Activated T-helper 1 cell treated with anti-CD3 and anti-CD28 coated beads, Interleukin-12 subunit alpha, Interleukin-12 subunit beta, Interleukin-2, Interleukin-4 antibody, amounts not matched to agents 30 ng/mL and 10 ng/mL and 1 ng/mL, durations not matched to agents 14 hours and 24 hours and 36 hours (primary cell): ENCODE measurements at regions of chr10 and their contacts with region 1.

Region 1: GRCh38 chr10:80472234-80473095 is 18.4 kb downstream of the TSPAN14 start:
- DNase-seq: peak; percentile 34
- H3K4me3 Mint-ChIP-seq: peak overlapping the region; percentile 48
- H3K27ac Mint-ChIP-seq: peak overlapping the region; percentile 97
- H3K4me1 Mint-ChIP-seq: peaks cover 80% of the 10 kb centered on the region
- H3K27me3 Mint-ChIP-seq: no peaks in the 10 kb centered on the region

Region 2: DNA sequence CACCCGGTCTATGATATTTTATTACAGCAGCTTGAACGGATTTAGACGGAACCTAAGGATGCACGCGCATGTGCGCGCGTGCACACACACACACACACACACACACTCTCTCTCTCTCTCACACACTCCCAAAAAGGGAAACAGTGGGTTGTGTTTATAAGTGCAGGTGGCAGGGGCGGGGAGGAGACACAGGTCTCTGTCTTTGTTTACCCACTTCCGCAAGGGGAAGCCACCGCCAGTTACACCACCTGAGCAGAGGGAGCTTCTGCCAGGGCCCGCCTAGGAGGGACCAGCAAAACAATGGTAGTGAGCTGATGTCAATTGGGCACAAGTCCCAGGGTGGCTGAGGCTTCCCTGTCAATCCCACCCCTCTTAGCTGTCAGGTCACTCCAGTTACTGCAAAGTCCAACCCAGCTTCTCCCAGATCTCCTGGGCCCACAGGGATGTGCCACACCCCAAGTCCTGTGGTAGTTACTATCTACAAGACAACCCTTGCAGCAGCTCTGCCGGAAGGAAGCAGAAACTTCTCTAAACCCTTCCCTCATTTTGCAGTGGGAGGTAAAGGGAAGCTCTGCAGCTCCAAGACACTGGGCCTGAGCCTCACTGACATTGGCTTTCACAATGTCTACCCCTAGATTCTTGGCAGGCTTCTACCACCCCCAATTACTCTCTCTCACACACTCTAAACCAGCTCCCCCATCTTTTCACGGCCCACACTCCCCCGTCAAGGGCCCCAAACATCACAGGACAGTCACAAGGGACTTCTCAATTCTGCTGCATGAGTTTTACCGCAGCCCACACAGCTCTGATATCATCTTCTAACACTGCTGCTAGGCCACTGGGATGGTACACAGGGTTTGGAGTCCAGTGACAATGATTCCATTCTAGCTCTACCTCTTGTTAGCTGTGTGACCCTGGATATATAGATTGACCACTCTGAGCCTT is 284.7 kb before region 1 on chr10:
- intact Hi-C with region 1: loop called (anchors 5 kb)
- DNase-seq: peak; percentile 75
- H3K4me3 Mint-ChIP-seq: peak overlapping the region; percentile 68
- H3K27ac Mint-ChIP-seq: peak overlapping the region; percentile 94
- H3K4me1 Mint-ChIP-seq: peaks cover 78% of the 10 kb centered on the region
- H3K27me3 Mint-ChIP-seq: no peaks in the 10 kb centered on the region

Region 3: GRCh38 chr10:80453701-80454513 is 18.6 kb before region 1 on chr10 and contains the start of gene TSPAN14:
- intact Hi-C with region 1: loop called (anchors 1 kb)
- DNase-seq: peak; percentile 73
- H3K4me3 Mint-ChIP-seq: peak within 1 kb of the TSS; percentile 98
- H3K27ac Mint-ChIP-seq: peak within 1 kb of the TSS; percentile 88
- H3K4me1 Mint-ChIP-seq: peaks cover 49% of the 10 kb centered on the region
- H3K27me3 Mint-ChIP-seq: no peaks in the 10 kb centered on the region
- total RNA-seq, gene TSPAN14: 75.4 and 81.9 TPM in 2 replicates

Region 4: GRCh38 chr10:80459047-80459931 is 13.2 kb before region 1 on chr10:
- intact Hi-C with region 1: loop called (anchors 1 kb)
- DNase-seq: peak; percentile 67
- H3K4me3 Mint-ChIP-seq: peak overlapping the region; percentile 98
- H3K27ac Mint-ChIP-seq: peak overlapping the region; percentile 88
- H3K4me1 Mint-ChIP-seq: peaks cover 86% of the 10 kb centered on the region
- H3K27me3 Mint-ChIP-seq: no peaks in the 10 kb centered on the region

Region 5: GRCh38 chr10:80487791-80488538 is 15.5 kb after region 1 on chr10:
- intact Hi-C with region 1: loop called (anchors 1 kb)
- DNase-seq: peak; percentile 63
- H3K4me3 Mint-ChIP-seq: peak overlapping the region; percentile 71
- H3K27ac Mint-ChIP-seq: peak overlapping the region; percentile 92
- H3K4me1 Mint-ChIP-seq: peaks cover 98% of the 10 kb centered on the region
- H3K27me3 Mint-ChIP-seq: no peaks in the 10 kb centered on the region

Region 6: GRCh38 chr10:80493522-80494051 is 21.1 kb after region 1 on chr10:
- intact Hi-C with region 1: loop called (anchors 1 kb)
- DNase-seq: no peak
- H3K4me3 Mint-ChIP-seq: peak overlapping the region; percentile 70
- H3K27ac Mint-ChIP-seq: peak overlapping the region; percentile 94
- H3K4me1 Mint-ChIP-seq: peaks cover 94% of the 10 kb centered on the region
- H3K27me3 Mint-ChIP-seq: no peaks in the 10 kb centered on the region

Region 7: GRCh38 chr10:80504158-80504811 is 31.8 kb after region 1 on chr10:
- intact Hi-C with region 1: loop called (anchors 1 kb)
- DNase-seq: no peak
- H3K4me3 Mint-ChIP-seq: no peak overlapping the region
- H3K27ac Mint-ChIP-seq: peak overlapping the region; percentile 86
- H3K4me1 Mint-ChIP-seq: peaks cover 67% of the 10 kb centered on the region
- H3K27me3 Mint-ChIP-seq: no peaks in the 10 kb centered on the region